ENCODE measurements at regions of chr9 and their contacts with region 1.

Region 1: GRCh38 chr9:69759421-69760277 is at the start of gene PTAR1:
- DNase-seq: peak; percentile 78 to 90 (median 84)
- H3K4me3 ChIP-seq: peak within 1 kb of the TSS; percentile 54 to 98 (median 86)
- H3K27ac ChIP-seq: peak within 1 kb of the TSS; percentile 67 to 98 (median 94)
- H3K27me3 ChIP-seq: no peaks in the 10 kb centered on the region
- CTCF ChIP-seq: peak in 40 of 56 donors; percentile 2 to 58 (median 24)
- total RNA-seq, gene PTAR1: 42.5 to 120 (median 68.6) TPM

Region 2: DNA sequence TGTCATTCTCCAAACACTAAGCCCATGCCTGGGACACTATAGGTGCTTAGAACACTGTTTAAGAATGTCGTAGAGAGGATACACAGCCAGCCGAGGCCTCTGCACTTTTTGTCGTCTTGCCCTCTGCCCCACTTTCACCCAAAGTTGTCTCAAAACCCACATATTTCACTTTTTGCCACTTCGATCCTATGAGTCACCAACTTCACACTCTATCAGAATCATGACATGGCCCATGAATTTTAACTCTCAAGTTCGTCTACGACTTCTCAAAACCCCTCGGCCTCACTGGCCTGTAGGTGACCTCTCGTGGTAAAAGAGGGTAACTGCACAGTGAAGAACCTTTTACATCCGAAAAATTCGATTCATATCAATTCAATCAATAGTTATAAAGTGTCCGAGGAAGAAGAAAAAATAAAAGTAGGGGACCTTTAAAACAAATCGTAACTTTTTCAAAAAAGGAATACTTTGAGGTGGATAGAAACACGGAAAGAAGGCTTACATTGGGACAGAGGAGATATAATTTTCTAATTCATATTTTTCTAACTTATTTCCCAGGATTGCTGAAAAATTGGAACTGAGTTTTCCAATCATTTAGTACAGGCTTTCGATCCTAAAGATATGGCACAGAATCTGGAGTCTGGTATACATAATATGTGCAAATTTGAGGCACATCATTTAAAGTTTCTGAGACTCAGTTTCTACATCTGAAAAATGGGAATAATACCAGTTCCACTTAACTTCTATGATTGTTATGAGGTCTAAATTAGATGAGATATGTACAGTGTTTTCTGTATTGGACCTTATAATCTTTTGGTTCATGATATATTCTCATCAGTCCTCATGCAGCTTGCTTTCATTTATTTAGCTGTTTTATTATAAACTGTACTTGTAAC is 210.1 kb before region 1 on chr9:
- intact Hi-C with region 1: loop called in 1 of 2 experiments (anchors 10 kb)
- DNase-seq: peak in 1 of 10 donors; percentile 22
- H3K4me3 ChIP-seq: peak overlapping the region in 8 of 59 donors; percentile 2 to 44 (median 15)
- H3K27ac ChIP-seq: peak overlapping the region in 27 of 59 donors; percentile 0 to 76 (median 44)
- H3K27me3 ChIP-seq: no peaks in the 10 kb centered on the region
- CTCF ChIP-seq: peak; percentile 66 to 98 (median 86)

Region 3: GRCh38 chr9:69877854-69878514 is 118.3 kb after region 1 on chr9:
- intact Hi-C with region 1: loop called in 1 of 2 experiments (anchors 10 kb)
- DNase-seq: no peak
- H3K4me3 ChIP-seq: no peak overlapping the region
- H3K27ac ChIP-seq: no peak overlapping the region
- H3K27me3 ChIP-seq: no peaks in the 10 kb centered on the region
- CTCF ChIP-seq: peak; percentile 39 to 84 (median 67)

Region 4: GRCh38 chr9:69919461-69920061 is 159.9 kb after region 1 on chr9:
- intact Hi-C with region 1: loop called in 1 of 2 experiments (anchors 10 kb)
- DNase-seq: peak in 1 of 10 donors; percentile 14
- H3K4me3 ChIP-seq: no peak overlapping the region
- H3K27ac ChIP-seq: no peak overlapping the region
- H3K27me3 ChIP-seq: peaks cover 0 to 8% (median 0%) of the 10 kb centered on the region in 45 donors
- CTCF ChIP-seq: peak; percentile 62 to 90 (median 81)

Region 5: DNA sequence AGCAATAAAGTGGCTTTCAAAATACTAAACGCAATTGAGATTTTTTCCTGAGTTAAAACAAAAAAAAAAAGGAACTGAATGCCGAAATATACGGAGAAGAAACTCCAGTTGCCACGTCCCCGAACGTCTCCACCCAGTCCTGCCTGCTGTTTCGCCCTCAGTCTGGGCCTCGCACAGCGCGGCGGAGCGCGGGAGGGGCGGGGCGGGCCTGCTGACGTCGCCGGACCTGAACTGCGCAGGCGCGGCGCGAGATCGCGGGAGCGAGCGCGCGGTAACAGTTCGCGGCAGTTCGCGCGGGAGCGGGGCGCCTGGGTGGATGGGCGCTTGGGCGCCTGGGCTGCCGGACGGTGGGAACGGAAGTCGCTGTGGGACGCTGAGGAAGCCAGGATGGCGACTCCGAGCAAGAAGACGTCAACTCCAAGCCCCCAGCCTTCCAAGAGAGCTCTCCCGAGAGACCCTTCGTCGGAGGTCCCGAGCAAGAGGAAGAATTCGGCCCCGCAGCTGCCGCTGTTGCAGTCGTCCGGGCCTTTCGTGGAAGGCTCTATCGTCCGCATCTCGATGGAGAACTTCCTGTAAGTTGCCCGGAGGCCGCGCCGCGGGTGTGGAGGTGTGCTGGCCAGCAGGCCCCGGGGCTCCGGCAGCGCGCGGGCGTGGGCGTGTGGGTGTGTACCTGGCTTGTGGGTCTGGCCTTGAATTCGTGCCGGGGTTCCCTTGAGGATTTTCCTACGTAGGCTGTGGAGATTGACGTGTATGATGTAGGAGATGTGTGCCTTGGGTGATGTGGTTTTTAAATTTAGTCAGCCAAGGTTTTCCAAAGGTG is 499.3 kb after region 1 on chr9 and contains the start of gene SMC5:
- intact Hi-C with region 1: loop called in 1 of 2 experiments (anchors 10 kb)
- DNase-seq: peak; percentile 78 to 96 (median 87)
- H3K4me3 ChIP-seq: peak within 1 kb of the TSS; percentile 64 to 99 (median 92)
- H3K27ac ChIP-seq: peak within 1 kb of the TSS; percentile 63 to 97 (median 88)
- H3K27me3 ChIP-seq: no peaks in the 10 kb centered on the region
- CTCF ChIP-seq: peak in 21 of 56 donors; percentile 8 to 51 (median 28)
- total RNA-seq, gene SMC5: 12.0 to 37.3 (median 21.9) TPM